Right ventricle myocardium inferior (tissue), 1 donor: ENCODE measurements at regions of chr9 and their contacts with region 1.

Region 1: DNA sequence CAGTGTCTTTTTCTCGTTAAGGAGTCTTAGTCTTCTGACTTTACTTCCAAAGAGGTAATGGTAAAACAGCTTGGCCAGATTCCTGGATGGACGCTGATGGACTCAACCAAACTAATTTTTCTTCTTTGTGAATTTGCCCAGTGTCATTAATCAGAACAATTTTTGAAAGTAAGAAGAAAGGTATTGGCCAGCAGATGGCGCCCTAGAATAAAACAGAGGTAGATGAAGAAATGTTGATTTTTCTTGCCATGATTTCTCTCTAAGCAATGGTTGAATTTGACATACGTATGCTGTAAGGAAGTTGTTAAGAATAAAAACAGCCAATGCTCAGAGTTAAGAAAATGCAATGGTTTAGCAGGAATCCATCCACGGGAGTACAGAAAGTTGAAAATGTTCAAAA is 500.0 kb downstream of the DIRAS2 start:
- DNase-seq: no peak
- ATAC-seq: no peak

Region 2: GRCh38 chr9:90219548-90220118 is 77.1 kb after region 1 on chr9:
- intact Hi-C with region 1: loop called (anchors 10 kb)
- DNase-seq: peak; percentile 65
- ATAC-seq: no peak